Vagina (tissue), 2 donors: ENCODE measurements at regions of chr6 and their contacts with region 1.

Region 1: GRCh38 chr6:21593412-21593926 is at the start of gene SOX4:
- DNase-seq: peak in 1 of 2 donors; percentile 97
- H3K4me3 ChIP-seq: peak within 1 kb of the TSS; percentile 75 to 79
- H3K27ac ChIP-seq: peak within 1 kb of the TSS; percentile 92
- H3K4me1 ChIP-seq: peaks cover 24% of the 10 kb centered on the region
- H3K27me3 ChIP-seq: no peaks in the 10 kb centered on the region
- CTCF ChIP-seq: no peak
- POLR2A ChIP-seq: peak in 1 of 2 donors; percentile 89
- total RNA-seq, gene SOX4: 11.5 TPM

Region 2: DNA sequence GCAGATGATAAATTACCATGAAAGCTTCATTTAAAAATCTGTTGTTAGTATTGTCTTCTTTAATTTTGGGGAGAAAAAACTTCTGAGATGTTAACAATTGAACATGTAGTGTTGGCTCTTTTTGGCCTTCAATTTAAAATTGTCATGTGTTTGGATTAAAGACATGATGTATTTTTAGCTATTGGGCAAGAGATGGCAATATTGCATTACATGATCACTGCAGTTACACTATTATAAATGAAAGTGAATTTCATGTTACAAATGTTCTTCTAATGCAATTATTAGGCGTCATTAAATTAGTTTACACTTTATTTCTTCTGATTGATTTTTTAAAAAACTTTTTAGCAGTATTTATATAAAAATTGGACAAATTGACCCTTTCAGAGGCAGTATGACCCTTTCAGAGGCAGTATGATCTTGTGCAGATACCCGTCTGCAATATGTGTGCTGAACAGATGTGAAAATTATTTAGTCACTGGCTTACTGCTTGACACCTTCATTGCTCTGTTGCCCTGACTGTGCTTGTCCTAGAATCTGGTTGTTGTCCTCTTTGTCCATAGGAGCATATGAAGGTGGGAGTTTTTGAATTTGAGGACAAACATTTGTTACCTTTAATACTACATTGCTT is 1033.4 kb before region 1 on chr6:
- intact Hi-C with region 1: loop called (anchors 10 kb)
- DNase-seq: no peak
- H3K4me3 ChIP-seq: no peak overlapping the region
- H3K27ac ChIP-seq: no peak overlapping the region
- H3K4me1 ChIP-seq: no peaks in the 10 kb centered on the region
- H3K27me3 ChIP-seq: no peaks in the 10 kb centered on the region
- CTCF ChIP-seq: no peak
- POLR2A ChIP-seq: no peak

Region 3: DNA sequence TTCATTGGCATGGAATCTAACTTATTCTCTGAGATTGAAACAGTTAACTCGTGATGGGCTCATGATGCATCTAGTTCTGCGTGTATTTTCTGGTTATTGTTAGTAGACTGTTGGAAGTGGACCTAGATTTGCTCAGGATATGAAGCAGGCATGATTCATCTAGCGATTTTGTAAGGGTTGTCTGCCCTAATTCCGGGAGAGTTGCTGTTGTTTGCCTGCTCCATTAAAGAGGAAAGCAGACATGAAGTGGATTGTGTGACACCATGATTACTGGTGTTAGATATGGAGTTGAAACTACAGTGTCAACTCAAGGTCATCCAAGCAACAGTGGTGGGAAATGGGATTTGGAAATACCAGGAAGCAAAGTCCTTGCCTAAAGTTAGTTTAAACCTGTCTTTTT is 41.1 kb after region 1 on chr6:
- intact Hi-C with region 1: no loop called
- DNase-seq: no peak
- H3K4me3 ChIP-seq: no peak overlapping the region
- H3K27ac ChIP-seq: no peak overlapping the region
- H3K4me1 ChIP-seq: peaks cover 4% of the 10 kb centered on the region
- H3K27me3 ChIP-seq: no peaks in the 10 kb centered on the region
- CTCF ChIP-seq: no peak
- POLR2A ChIP-seq: no peak

Region 4: DNA sequence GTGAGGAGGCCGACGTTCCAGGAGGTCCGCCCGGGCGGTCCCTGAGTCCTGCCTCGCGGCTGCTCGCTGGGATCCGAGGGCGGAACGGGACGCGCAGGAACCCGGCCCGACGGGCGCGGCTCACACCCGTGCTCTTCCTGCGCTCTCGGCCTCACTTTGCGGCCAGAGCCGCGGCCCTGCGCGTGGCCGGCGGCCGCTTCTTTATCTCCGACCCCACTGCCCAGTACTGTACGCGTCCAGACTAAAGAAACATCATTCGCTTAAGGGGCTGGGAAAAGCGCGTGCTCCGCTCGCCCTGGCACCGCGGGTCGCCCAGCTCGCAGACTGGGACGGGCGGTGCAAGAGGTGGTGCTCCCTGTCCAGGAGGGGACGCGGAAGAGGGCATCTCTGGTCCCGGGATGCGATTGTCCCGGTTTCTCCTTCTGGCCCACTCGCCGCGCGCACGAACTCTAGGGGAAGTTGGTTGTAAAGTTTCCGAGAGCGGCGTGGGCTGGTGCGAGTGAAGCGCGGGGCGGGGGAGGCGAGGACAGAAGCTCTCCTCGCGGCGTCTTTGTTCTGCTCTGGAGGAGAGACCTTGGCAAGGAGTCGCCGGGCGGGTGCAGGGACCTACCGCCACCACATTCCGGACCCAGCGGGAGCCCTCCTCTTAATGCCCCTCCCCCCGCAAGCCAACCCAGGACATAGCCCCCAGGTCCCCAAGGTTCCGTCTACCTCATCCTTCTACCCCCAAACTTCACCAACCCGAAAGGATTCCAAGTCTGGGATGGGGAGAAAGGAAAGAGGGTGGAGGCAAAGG is 71.0 kb after region 1 on chr6:
- intact Hi-C with region 1: loop called (anchors 10 kb)
- DNase-seq: no peak
- H3K4me3 ChIP-seq: peak overlapping the region; percentile 56 to 62
- H3K27ac ChIP-seq: peak overlapping the region; percentile 54
- H3K4me1 ChIP-seq: peaks cover 26% of the 10 kb centered on the region
- H3K27me3 ChIP-seq: no peaks in the 10 kb centered on the region
- CTCF ChIP-seq: no peak
- POLR2A ChIP-seq: no peak

Region 5: DNA sequence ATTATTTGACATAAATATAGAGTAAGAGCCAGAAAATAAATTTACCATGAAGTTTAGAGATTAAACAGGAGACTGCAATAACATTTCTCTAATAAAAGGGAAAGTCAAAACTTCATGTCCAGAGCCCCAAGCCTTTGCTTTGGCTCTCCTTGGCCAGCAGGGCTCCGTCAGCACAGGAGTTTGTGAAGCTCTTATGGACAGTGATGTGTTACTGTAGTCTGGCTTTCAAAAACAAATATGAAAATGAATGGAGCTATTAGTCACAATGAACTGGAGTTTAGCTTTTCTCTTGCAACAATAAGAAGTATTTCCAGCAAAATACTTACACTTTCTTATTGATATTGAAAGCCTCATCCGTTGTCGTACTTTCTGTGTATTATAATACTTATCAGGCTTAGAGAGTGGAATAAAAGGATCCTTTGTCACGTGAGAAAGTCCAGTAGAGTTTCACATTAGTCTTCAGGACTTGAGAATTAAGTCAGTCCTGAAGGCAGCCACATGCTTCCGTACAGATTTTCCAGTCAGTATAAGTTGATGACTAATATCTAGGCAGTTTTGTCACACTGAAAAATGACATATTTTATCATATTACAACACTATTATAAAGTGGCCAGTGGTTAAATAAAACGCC is 820.3 kb after region 1 on chr6:
- intact Hi-C with region 1: no loop called
- DNase-seq: no peak
- H3K4me3 ChIP-seq: no peak overlapping the region
- H3K27ac ChIP-seq: no peak overlapping the region
- H3K4me1 ChIP-seq: peaks cover 8% of the 10 kb centered on the region
- H3K27me3 ChIP-seq: no peaks in the 10 kb centered on the region
- CTCF ChIP-seq: no peak
- POLR2A ChIP-seq: no peak